Cardiac septum (tissue), 1 donor: ENCODE measurements at regions of chr1 and their contacts with region 1.

Region 1: GRCh38 chr1:17125756-17126237 is 6.5 kb upstream of the PADI2 start:
- DNase-seq: peak; percentile 95

Region 2: GRCh38 chr1:17236779-17237560 is 111.2 kb after region 1 on chr1:
- intact Hi-C with region 1: loop called (anchors 1 kb)
- DNase-seq: peak; percentile 91

Region 3: GRCh38 chr1:17335821-17336710 is 210.3 kb after region 1 on chr1:
- intact Hi-C with region 1: loop called (anchors 5 kb)
- DNase-seq: no peak

Region 4: GRCh38 chr1:17405898-17406759 is 280.3 kb after region 1 on chr1:
- intact Hi-C with region 1: loop called (anchors 5 kb)
- DNase-seq: peak; percentile 81